ENCODE measurements at regions of chr1 and their contacts with region 1.

Region 1: GRCh38 chr1:40449684-40450494 is at the start of gene ZFP69B:
- DNase-seq: peak; percentile 70 to 93 (median 82)
- ATAC-seq: peak; percentile 65
- H3K4me3 ChIP-seq: peak within 1 kb of the TSS; percentile 78
- H3K4me3 Mint-ChIP-seq: peak within 1 kb of the TSS; percentile 91
- H3K27ac ChIP-seq: peak within 1 kb of the TSS; percentile 51 to 70
- H3K27ac Mint-ChIP-seq: peak within 1 kb of the TSS; percentile 84
- H3K4me1 ChIP-seq: peaks cover 17% of the 10 kb centered on the region
- H3K4me1 Mint-ChIP-seq: peaks cover 27% of the 10 kb centered on the region
- H3K27me3 ChIP-seq: no peaks in the 10 kb centered on the region
- H3K27me3 Mint-ChIP-seq: no peaks in the 10 kb centered on the region
- CTCF ChIP-seq: no peak
- total RNA-seq, gene ZFP69B: 1.8 to 2.4 TPM

Region 2: GRCh38 chr1:40438391-40439015 is 11.4 kb before region 1 on chr1:
- CTCF ChIA-PET with region 1: interaction called, 10 read pairs
- POLR2A ChIA-PET with region 1: no interaction called
- intact Hi-C with region 1: no loop called
- DNase-seq: peak in 4 of 14 experiments; percentile 37 to 63 (median 54)
- ATAC-seq: peak; percentile 44
- H3K4me3 ChIP-seq: no peak overlapping the region
- H3K4me3 Mint-ChIP-seq: no peak overlapping the region
- H3K27ac ChIP-seq: no peak overlapping the region
- H3K27ac Mint-ChIP-seq: no peak overlapping the region
- H3K4me1 ChIP-seq: no peaks in the 10 kb centered on the region
- H3K4me1 Mint-ChIP-seq: no peaks in the 10 kb centered on the region
- H3K27me3 ChIP-seq: no peaks in the 10 kb centered on the region
- H3K27me3 Mint-ChIP-seq: no peaks in the 10 kb centered on the region
- CTCF ChIP-seq: peak; percentile 81

Region 3: DNA sequence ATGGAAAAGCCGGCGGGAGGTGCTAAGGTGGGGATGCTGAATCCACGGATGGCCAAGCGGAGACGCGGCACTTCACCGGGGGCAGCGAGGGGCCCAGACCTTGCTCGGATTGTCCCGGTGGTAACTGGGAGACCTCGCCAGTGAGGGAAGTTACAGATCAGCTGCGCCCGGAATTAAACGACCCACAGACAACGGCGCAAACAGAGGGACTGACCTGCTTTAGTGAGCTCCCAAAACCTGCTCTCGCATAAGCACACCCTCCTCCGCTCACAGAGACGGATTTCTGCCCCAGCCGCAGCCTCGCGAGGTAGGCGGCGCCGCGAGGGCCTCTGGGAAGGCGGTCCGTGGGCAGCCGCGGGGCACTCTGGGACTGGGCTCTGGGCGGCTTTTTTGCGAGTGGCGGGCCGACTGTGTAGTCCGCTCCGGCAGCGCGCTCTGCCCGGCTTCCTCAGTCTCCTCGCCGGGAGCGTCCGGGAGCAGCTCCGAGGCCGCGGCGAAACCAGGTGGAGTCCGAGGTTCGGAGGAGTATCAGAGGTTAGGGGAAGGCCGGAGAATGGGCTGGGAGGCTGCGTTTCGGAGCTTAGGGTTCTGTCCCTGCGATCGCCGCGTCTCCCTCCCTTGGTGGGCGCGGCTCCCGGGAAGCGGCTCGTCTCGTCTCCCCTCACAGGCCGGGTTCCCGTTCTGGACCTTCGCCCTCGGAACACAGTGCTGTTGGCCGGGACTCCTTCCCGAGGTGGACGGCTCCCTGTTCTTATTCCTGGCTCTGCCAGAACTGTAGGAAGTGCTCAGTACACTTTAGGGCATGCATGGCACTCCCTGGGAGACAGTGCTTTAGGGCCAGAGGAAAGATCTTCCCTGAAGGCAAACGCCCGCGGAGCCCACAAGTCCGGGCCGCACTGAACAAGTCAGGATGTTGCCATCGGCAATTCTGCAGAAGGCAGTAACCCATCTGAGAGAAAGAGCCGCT is 58.8 kb after region 1 on chr1 and contains the start of gene EXO5:
- CTCF ChIA-PET with region 1: no interaction called
- POLR2A ChIA-PET with region 1: interaction called, 7 read pairs
- intact Hi-C with region 1: loop called in 1 of 2 experiments (anchors 5 kb)
- DNase-seq: peak; percentile 53 to 87 (median 77)
- ATAC-seq: peak; percentile 98
- H3K4me3 ChIP-seq: peak within 1 kb of the TSS; percentile 97
- H3K4me3 Mint-ChIP-seq: peak within 1 kb of the TSS; percentile 88
- H3K27ac ChIP-seq: peak within 1 kb of the TSS; percentile 5 to 35
- H3K27ac Mint-ChIP-seq: peak within 1 kb of the TSS; percentile 50
- H3K4me1 ChIP-seq: peaks cover 17% of the 10 kb centered on the region
- H3K4me1 Mint-ChIP-seq: peaks cover 15% of the 10 kb centered on the region
- H3K27me3 ChIP-seq: no peaks in the 10 kb centered on the region
- H3K27me3 Mint-ChIP-seq: no peaks in the 10 kb centered on the region
- CTCF ChIP-seq: no peak
- total RNA-seq, gene EXO5: 4.5 to 4.9 TPM

Region 4: DNA sequence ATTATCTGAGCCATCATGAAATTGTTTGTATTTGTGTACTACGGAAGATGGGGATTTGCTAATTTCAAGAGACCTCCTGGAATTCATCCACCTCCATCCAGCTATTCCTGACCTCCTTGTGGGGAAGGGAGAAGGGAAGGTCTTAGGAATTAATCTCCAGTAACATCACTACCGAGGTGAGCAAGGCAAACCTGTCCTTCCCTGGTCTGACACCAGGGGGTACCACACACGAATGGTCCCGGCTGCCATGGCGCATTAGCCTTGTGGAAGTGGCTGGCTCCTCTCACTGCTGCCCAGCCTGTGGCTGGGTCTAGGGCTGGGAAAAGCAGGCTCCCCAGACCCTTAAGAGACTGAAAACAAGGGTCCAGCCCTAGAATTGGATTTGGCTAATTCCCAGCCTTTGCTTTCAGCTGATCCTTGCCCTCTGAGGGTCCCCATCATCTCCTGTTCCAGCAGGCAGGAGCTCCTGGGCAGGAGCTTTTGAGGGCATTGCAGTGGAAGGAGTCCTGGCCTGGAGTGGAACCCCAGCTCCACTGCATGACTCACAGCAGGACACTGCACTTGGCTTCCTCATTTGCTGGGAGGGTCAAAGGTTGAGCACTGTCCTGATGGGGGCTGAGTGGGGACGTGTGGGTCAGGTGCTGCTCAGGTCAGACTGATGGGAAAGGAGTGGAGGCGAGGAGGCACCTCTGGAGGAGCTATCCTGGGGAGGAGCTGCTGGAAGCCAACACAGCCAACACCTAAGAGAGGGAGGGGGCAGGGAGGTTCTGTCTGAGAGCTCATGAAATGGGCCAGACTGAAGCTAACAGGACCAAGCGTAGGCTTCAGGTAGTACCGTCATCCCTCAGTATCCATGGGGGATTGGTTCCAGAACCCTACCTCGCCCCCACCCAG is 180.8 kb after region 1 on chr1:
- CTCF ChIA-PET with region 1: no interaction called
- POLR2A ChIA-PET with region 1: no interaction called
- intact Hi-C with region 1: no loop called
- DNase-seq: peak in 5 of 14 experiments; percentile 6 to 44 (median 20)
- ATAC-seq: no peak
- H3K4me3 ChIP-seq: no peak overlapping the region
- H3K4me3 Mint-ChIP-seq: no peak overlapping the region
- H3K27ac ChIP-seq: no peak overlapping the region
- H3K27ac Mint-ChIP-seq: no peak overlapping the region
- H3K4me1 ChIP-seq: peaks cover 28% of the 10 kb centered on the region
- H3K4me1 Mint-ChIP-seq: peaks cover 17% of the 10 kb centered on the region
- H3K27me3 ChIP-seq: no peaks in the 10 kb centered on the region
- H3K27me3 Mint-ChIP-seq: no peaks in the 10 kb centered on the region
- CTCF ChIP-seq: no peak

Measured in CD4-positive, alpha-beta T cell (primary cell).